HEK293 (cell line): ENCODE measurements at regions of chr1 and their contacts with region 1.

Region 1: GRCh38 chr1:205255941-205256780 is 28.4 kb downstream of the TMCC2 start:
- H3K4me3 ChIP-seq: no peak overlapping the region
- H3K27ac ChIP-seq: no peak overlapping the region
- H3K4me1 ChIP-seq: no peaks in the 10 kb centered on the region
- CTCF ChIP-seq: peak; percentile 94

Region 2: GRCh38 chr1:204975570-204976235 is 280.5 kb before region 1 on chr1:
- CTCF ChIA-PET with region 1: interaction called, 30 read pairs
- POLR2A ChIA-PET with region 1: no interaction called
- H3K4me3 ChIP-seq: no peak overlapping the region
- H3K27ac ChIP-seq: no peak overlapping the region
- H3K4me1 ChIP-seq: no peaks in the 10 kb centered on the region
- CTCF ChIP-seq: peak; percentile 84

Region 3: GRCh38 chr1:205121660-205122488 is 134.3 kb before region 1 on chr1 and contains the start of gene RBBP5:
- CTCF ChIA-PET with region 1: interaction called, 22 read pairs
- POLR2A ChIA-PET with region 1: interaction called, 8 read pairs
- H3K4me3 ChIP-seq: peak within 1 kb of the TSS; percentile 96
- H3K27ac ChIP-seq: peak within 1 kb of the TSS; percentile 71
- H3K4me1 ChIP-seq: 0 out of 2 replicates have a peak, but pooled peaks cover 2% of the 10 kb centered on the region
- CTCF ChIP-seq: peak; percentile 99

Region 4: GRCh38 chr1:205227584-205228006 is 28.6 kb before region 1 on chr1 and contains the start of gene TMCC2:
- CTCF ChIA-PET with region 1: interaction called, 253 read pairs
- POLR2A ChIA-PET with region 1: interaction called, 19 read pairs
- H3K4me3 ChIP-seq: peak within 1 kb of the TSS; percentile 63
- H3K27ac ChIP-seq: peak within 1 kb of the TSS; percentile 45; the same call in 1 of the 2 replicates
- H3K4me1 ChIP-seq: peaks cover 19% of the 10 kb centered on the region
- CTCF ChIP-seq: no peak

Region 5: GRCh38 chr1:205243350-205244191 is 12.6 kb before region 1 on chr1:
- CTCF ChIA-PET with region 1: interaction called, 30 read pairs
- POLR2A ChIA-PET with region 1: interaction called, 5 read pairs
- H3K4me3 ChIP-seq: no peak overlapping the region
- H3K27ac ChIP-seq: no peak overlapping the region
- H3K4me1 ChIP-seq: peaks cover 1% of the 10 kb centered on the region
- CTCF ChIP-seq: no peak

Region 6: GRCh38 chr1:205321164-205321958 is 65.2 kb after region 1 on chr1 and contains the start of gene NUAK2:
- CTCF ChIA-PET with region 1: interaction called, 23 read pairs
- POLR2A ChIA-PET with region 1: no interaction called
- H3K4me3 ChIP-seq: peak within 1 kb of the TSS; percentile 74
- H3K27ac ChIP-seq: peak within 1 kb of the TSS; percentile 18; the same call in 1 of the 2 replicates
- H3K4me1 ChIP-seq: peaks cover 10% of the 10 kb centered on the region
- CTCF ChIP-seq: peak; percentile 85